Activated CD4-positive, alpha-beta memory T cell treated with anti-CD3 and anti-CD28 coated beads for 36 hours (primary cell): ENCODE measurements at regions of chr20 and their contacts with region 1.

Region 1: DNA sequence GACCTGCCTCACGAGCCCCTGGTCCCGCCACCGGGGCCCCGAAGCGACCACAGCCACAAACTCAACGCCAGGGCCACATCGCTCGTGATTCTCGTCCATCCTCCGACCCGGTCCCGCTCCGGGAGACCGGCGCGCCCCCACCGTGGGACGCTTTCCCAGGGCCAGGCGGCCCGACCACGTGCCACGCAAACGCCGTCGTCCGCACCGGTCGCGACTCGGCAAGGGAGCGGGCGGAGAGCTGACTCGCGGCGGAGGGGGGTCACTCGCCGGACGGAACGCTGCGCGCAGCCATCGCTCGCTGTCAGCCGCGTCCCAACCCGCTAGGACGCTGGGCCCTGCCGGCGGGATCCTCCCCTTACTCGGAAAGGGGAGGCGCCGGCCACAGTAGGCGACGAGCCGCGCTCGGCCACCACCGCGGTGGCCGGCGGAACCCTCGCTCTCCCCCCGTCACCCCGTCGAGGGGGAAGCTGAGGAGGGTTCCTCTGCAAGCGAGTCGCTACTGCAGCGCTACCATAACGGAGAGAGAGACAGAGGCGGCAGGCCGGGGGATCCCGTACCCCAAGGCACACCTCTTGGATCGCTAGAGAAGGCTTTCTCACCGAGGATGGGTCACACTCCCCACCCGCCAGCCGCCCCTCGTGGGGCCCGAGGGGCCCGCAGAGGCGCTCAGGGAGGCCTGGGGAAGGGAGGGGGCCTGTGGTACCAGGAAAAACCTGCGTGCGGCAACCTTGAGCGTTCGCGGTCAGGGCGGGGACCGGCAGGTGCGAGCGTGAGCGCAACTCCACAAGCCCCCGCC is 511.8 kb upstream of the ZNF337 start:
- DNase-seq: peak; percentile 59
- H3K4me3 Mint-ChIP-seq: peak overlapping the region; percentile 49
- H3K27ac Mint-ChIP-seq: no peak overlapping the region
- H3K4me1 Mint-ChIP-seq: peaks cover 17% of the 10 kb centered on the region
- H3K27me3 Mint-ChIP-seq: peaks cover 21% of the 10 kb centered on the region

Region 2: DNA sequence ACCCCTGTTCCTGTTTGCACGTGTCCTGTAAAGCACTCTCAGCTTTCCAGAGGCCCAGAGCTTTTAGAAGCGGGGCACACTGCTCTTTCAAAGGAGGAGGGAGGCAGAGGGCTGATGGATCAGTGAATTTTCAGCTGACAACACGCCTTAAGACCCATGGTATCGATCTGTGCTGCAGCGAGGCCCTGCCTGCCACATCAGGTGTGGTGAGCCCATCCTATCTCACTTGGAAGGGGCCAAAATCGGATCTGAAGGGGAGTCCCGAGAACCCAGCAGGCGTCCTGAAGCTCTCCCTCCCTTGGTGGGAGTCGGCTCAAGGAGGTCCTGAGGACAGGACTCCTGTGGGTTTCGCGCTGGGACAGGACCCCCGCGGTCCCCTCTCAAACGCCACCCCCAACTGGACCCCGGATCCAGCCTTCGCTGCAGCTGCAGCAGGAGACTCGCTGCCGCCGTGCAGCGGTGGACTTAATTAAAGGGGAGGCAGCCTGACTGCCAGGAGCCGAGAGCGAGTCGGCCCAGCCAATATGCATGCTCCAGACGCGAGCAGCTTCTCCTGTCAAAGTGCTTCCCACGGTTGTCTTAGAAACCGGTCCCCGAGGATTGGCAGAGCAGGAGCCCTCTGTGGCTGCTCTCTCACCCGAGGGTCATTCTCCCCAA is 68.2 kb after region 1 on chr20:
- CTCF ChIA-PET with region 1: no interaction called
- POLR2A ChIA-PET with region 1: no interaction called
- intact Hi-C with region 1: loop called (anchors 10 kb)
- DNase-seq: no peak
- H3K4me3 Mint-ChIP-seq: no peak overlapping the region
- H3K27ac Mint-ChIP-seq: no peak overlapping the region
- H3K4me1 Mint-ChIP-seq: peaks cover 43% of the 10 kb centered on the region
- H3K27me3 Mint-ChIP-seq: no peaks in the 10 kb centered on the region